Activated CD4-positive, alpha-beta T cell treated with anti-CD3 and anti-CD28 coated beads for 36 hours (primary cell): ENCODE measurements at regions of chr12 and their contacts with region 1.

Region 1: DNA sequence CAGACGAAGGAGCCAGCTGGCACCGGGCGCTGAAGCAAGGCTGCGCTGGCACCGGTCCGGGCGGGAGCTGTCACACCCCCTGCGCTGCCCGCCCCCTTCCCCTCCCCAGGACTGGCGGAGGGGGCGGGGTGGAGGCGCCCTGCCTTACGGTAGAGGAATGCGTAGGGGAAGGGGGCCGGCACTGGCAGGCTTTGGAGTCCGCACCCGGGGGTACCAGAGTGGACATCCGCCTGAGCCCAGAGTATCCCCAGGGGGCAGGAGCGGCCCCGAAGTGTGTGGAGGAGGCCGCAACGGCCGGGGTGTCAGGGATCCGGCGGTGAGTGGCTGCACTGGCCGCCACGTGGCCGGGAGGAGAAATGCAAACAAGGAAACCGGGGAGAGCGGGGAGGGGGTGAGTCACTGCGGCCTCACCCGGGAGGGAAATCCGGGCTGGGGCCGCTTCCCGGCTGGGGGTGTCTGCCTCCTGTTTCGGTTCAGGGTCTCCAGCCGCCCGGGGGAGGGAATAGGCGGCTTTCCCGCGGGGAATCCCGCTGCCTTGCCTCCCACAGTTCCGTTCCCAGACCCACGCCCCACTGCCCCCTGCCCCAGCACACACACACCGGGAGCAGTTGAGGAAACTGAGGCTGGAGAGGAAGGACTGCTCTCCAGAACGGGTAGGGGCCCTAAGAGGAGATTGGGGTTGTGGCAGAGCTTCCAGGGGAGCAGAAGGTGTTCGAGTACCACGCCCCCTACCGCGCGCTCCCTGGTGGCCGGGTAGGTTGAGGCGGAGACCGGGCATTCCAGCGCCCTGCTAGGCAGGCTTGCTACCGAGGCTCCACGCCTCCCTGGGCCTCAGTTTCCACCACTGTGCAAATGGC is at the start of gene RAPGEF3:
- DNase-seq: peak; percentile 84
- ATAC-seq: peak; percentile 74
- H3K4me3 Mint-ChIP-seq: peak within 1 kb of the TSS; percentile 63
- H3K27ac Mint-ChIP-seq: no peak within 1 kb of the TSS
- H3K4me1 Mint-ChIP-seq: peaks cover 47% of the 10 kb centered on the region
- H3K27me3 Mint-ChIP-seq: no peaks in the 10 kb centered on the region
- total RNA-seq, gene RAPGEF3: 0.43 to 0.83 TPM

Region 2: GRCh38 chr12:47267571-47267970 is 491.5 kb before region 1 on chr12:
- CTCF ChIA-PET with region 1: no interaction called
- POLR2A ChIA-PET with region 1: no interaction called
- intact Hi-C with region 1: no loop called
- DNase-seq: no peak
- ATAC-seq: no peak
- H3K4me3 Mint-ChIP-seq: no peak overlapping the region
- H3K27ac Mint-ChIP-seq: no peak overlapping the region
- H3K4me1 Mint-ChIP-seq: peaks cover 61% of the 10 kb centered on the region
- H3K27me3 Mint-ChIP-seq: no peaks in the 10 kb centered on the region

Region 3: DNA sequence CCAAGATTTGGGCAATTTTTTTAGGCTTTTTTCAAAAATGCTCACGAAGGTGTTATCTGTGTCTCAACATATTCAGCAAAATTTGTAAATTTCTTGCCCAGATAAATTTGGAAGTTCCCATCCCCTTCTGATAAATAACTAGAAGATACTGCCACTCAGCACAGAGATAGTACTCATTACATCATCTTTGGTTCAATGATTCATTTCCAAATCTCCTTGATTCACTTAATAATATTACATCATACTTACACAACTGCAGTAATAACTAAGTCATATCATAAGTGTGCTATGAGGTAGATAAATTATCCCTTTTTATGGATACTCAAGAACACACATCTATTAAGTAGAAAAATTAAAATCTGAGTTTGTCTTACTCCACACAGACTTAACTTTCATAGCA is 142.6 kb before region 1 on chr12:
- CTCF ChIA-PET with region 1: no interaction called
- POLR2A ChIA-PET with region 1: no interaction called
- intact Hi-C with region 1: no loop called
- DNase-seq: no peak
- ATAC-seq: peak; percentile 61
- H3K4me3 Mint-ChIP-seq: no peak overlapping the region
- H3K27ac Mint-ChIP-seq: no peak overlapping the region
- H3K4me1 Mint-ChIP-seq: peaks cover 8% of the 10 kb centered on the region
- H3K27me3 Mint-ChIP-seq: no peaks in the 10 kb centered on the region

Region 4: DNA sequence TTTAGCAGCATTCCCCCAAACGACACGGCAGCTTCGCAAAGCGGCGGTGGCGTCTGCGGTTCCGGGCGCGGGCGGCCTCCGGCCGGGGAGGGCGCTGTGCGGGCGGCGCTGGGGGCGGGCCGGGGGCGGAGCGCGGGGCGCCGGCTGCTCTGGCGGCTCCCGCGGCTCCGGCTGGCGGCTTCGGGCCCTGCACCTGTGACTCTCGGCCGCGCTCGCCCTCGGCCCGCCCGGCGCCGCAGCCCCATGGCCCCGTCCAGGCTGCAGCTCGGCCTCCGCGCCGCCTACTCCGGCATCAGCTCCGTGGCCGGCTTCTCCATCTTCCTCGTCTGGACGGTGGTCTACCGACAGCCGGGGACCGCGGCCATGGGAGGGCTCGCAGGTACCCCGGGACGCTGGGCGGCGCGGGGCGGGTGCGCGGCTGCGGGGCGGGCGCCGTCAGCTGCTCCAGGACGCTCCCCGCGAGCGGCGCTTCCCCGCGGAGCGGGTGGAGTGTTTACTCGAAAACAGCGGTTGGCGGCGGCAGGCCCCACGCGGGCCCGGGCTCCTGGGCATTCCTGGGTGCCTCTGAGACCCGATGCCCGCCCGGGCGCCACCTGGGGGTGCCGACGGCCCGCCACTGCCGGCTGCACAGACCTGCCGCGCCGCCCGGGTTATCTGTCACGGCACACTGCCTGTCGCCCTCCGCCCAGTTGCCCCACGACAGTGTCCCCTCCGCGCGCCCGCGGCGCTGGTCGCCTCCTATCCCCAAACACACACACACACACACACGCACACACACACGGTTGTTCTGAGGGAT is 14.2 kb after region 1 on chr12 and contains the start of gene SLC48A1:
- CTCF ChIA-PET with region 1: interaction called, 92 read pairs
- POLR2A ChIA-PET with region 1: interaction called, 3 read pairs
- intact Hi-C with region 1: loop called in 1 of 2 experiments (anchors 1 kb)
- DNase-seq: peak; percentile 82
- ATAC-seq: peak; percentile 79
- H3K4me3 Mint-ChIP-seq: peak within 1 kb of the TSS; percentile 82
- H3K27ac Mint-ChIP-seq: peak within 1 kb of the TSS; percentile 71
- H3K4me1 Mint-ChIP-seq: peaks cover 31% of the 10 kb centered on the region
- H3K27me3 Mint-ChIP-seq: no peaks in the 10 kb centered on the region
- total RNA-seq, gene SLC48A1: 5.9 to 8.5 TPM